ENCODE measurements at regions of chr9 and their contacts with region 1.

Region 1: GRCh38 chr9:112074250-112075008 is 100.7 kb downstream of the SUSD1 start:
- DNase-seq: peak; percentile 58
- H3K4me3 ChIP-seq: no peak overlapping the region
- H3K27ac ChIP-seq: no peak overlapping the region
- H3K4me1 ChIP-seq: peaks cover 8% of the 10 kb centered on the region
- CTCF ChIP-seq: peak; percentile 96

Region 2: GRCh38 chr9:111597817-111598729 is 476.4 kb before region 1 on chr9:
- CTCF ChIA-PET with region 1: no interaction called
- POLR2A ChIA-PET with region 1: no interaction called
- intact Hi-C with region 1: loop called (anchors 10 kb)
- DNase-seq: peak; percentile 66
- H3K4me3 ChIP-seq: peak overlapping the region; percentile 43
- H3K27ac ChIP-seq: no peak overlapping the region
- H3K4me1 ChIP-seq: peaks cover 4% of the 10 kb centered on the region
- CTCF ChIP-seq: peak; percentile 89

Region 3: DNA sequence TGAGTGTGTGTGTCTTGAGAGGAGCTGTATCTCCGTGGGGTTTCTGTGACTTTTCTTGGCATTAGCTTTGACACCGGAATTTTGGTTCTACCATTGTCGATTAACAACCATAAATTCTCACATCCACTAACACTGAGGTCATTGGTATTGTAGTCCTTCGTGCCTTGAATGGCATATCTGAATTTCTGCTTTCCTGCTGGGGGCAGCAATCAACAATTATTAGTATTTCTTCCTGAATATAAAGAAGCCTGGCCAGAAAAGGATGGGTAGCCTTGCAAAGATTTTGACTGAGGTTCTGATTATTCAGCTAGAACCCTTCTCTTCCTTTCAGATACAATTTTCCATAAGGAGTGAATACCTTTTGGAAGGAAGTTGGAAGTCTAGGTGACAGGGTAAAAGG is 246.2 kb before region 1 on chr9:
- CTCF ChIA-PET with region 1: no interaction called
- POLR2A ChIA-PET with region 1: interaction called, 3 read pairs
- intact Hi-C with region 1: loop called (anchors 1 kb)
- DNase-seq: peak; percentile 23
- H3K4me3 ChIP-seq: no peak overlapping the region
- H3K27ac ChIP-seq: no peak overlapping the region
- H3K4me1 ChIP-seq: no peaks in the 10 kb centered on the region
- CTCF ChIP-seq: peak; percentile 70

Region 4: DNA sequence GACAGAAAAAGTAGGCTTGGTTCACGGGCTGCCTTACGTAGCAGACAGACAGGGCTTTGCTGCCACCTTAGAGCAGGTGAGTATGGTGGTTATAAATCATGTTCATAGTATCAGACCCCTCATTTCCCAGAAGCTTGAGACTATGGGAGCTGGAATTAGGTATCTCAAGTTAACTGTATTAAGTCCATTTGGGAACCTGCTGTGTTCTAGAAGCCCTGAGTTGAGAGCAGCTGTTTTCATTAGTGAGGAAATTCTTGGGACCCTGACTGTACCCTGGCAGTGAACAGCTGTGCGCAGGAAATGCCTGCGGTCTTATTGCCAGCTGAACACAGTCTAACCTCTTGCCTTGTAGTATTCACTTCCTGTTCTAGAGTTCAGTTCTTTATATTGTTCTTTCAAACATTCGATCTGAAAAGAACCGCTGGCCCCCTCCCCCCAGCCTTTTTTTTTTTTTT is 148.0 kb before region 1 on chr9:
- CTCF ChIA-PET with region 1: no interaction called
- POLR2A ChIA-PET with region 1: no interaction called
- intact Hi-C with region 1: loop called (anchors 10 kb)
- DNase-seq: peak; percentile 91
- H3K4me3 ChIP-seq: peak overlapping the region; percentile 38
- H3K27ac ChIP-seq: peak overlapping the region; percentile 80
- H3K4me1 ChIP-seq: peaks cover 68% of the 10 kb centered on the region
- CTCF ChIP-seq: no peak; the same call in 1 of the 2 replicates

Region 5: DNA sequence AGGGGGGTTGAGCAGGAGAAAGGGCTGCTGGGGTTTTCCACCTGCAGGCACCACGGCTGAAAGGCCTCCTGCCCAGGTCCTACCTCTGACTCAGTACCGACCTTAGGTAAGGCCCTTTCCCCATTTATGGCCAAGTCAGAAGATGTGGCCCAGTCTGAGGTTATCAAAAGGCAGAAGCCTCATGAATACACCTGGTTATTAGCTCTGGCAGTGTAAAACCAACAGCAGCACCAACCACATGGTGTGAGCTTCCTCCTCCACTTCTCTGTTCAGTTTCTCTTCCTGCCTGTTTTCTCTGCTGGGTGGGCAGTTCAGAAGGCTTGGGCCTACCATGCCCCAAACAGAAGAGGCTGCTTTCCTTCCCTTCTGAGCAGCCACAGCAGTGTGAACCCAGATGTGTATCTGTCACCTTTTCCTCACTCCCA is 90.9 kb before region 1 on chr9:
- CTCF ChIA-PET with region 1: no interaction called
- POLR2A ChIA-PET with region 1: no interaction called
- intact Hi-C with region 1: loop called (anchors 2 kb)
- DNase-seq: peak; percentile 67
- H3K4me3 ChIP-seq: no peak overlapping the region
- H3K27ac ChIP-seq: peak overlapping the region; percentile 13
- H3K4me1 ChIP-seq: peaks cover 16% of the 10 kb centered on the region
- CTCF ChIP-seq: no peak

Measured in OCI-LY7 (cell line).